GM12878 (cell line): ENCODE measurements at regions of chr2 and their contacts with region 1.

Region 1: GRCh38 chr2:178700922-178701342 is 106.3 kb downstream of the TTN start:
- DNase-seq: no peak
- ATAC-seq: peak; percentile 55
- H3K4me3 ChIP-seq: no peak overlapping the region
- H3K27ac ChIP-seq: no peak overlapping the region
- H3K4me1 ChIP-seq: no peaks in the 10 kb centered on the region
- H3K27me3 ChIP-seq: no peaks in the 10 kb centered on the region
- CTCF ChIP-seq: peak; percentile 69 to 94 (median 87)
- EP300 ChIP-seq: no peak
- POLR2A ChIP-seq: no peak
- RAD21 ChIP-seq: peak; percentile 42; the same call in 1 of the 2 replicates

Region 2: GRCh38 chr2:178689808-178690207 is 11.1 kb before region 1 on chr2:
- CTCF ChIA-PET with region 1: interaction called, 28 read pairs
- POLR2A ChIA-PET with region 1: no interaction called
- RAD21 ChIA-PET with region 1: interaction called, 3 read pairs
- SMC1A ChIA-PET with region 1: interaction called, 7 read pairs
- in situ Hi-C with region 1: no loop called
- intact Hi-C with region 1: no loop called
- DNase-seq: no peak
- ATAC-seq: no peak
- H3K4me3 ChIP-seq: no peak overlapping the region
- H3K27ac ChIP-seq: no peak overlapping the region
- H3K4me1 ChIP-seq: no peaks in the 10 kb centered on the region
- H3K27me3 ChIP-seq: no peaks in the 10 kb centered on the region
- CTCF ChIP-seq: no peak
- EP300 ChIP-seq: no peak
- POLR2A ChIP-seq: no peak
- RAD21 ChIP-seq: no peak

Region 3: GRCh38 chr2:178718283-178718682 is 17.4 kb after region 1 on chr2:
- CTCF ChIA-PET with region 1: interaction called, 12 read pairs
- POLR2A ChIA-PET with region 1: no interaction called
- RAD21 ChIA-PET with region 1: interaction called, 3 read pairs
- SMC1A ChIA-PET with region 1: no interaction called
- in situ Hi-C with region 1: no loop called
- intact Hi-C with region 1: no loop called
- DNase-seq: no peak
- ATAC-seq: no peak
- H3K4me3 ChIP-seq: no peak overlapping the region
- H3K27ac ChIP-seq: no peak overlapping the region
- H3K4me1 ChIP-seq: no peaks in the 10 kb centered on the region
- H3K27me3 ChIP-seq: no peaks in the 10 kb centered on the region
- CTCF ChIP-seq: no peak
- EP300 ChIP-seq: no peak
- POLR2A ChIP-seq: no peak
- RAD21 ChIP-seq: no peak

Region 4: DNA sequence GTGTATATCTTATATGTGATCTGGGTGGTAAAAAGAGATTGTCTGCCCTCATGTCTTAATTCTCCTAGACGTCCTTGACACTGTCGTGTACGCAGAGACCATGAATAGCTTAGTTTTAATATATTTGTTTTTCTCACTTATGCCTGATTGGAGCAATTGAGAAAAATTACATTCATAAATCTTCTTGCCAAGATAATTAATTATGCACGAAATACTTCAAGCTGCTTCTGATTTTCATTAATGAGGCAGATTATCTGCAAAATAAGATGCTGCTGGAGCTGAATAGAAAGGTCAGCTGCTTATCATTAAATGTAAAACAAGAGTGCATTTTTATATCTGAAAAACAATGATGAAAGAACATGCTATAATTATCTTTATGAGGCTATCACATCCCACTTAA is 253.1 kb after region 1 on chr2:
- CTCF ChIA-PET with region 1: no interaction called
- POLR2A ChIA-PET with region 1: no interaction called
- RAD21 ChIA-PET with region 1: no interaction called
- SMC1A ChIA-PET with region 1: no interaction called
- in situ Hi-C with region 1: no loop called
- intact Hi-C with region 1: no loop called
- DNase-seq: no peak
- ATAC-seq: no peak
- H3K4me3 ChIP-seq: no peak overlapping the region
- H3K27ac ChIP-seq: no peak overlapping the region
- H3K4me1 ChIP-seq: no peaks in the 10 kb centered on the region
- H3K27me3 ChIP-seq: no peaks in the 10 kb centered on the region
- CTCF ChIP-seq: no peak
- EP300 ChIP-seq: no peak
- POLR2A ChIP-seq: no peak
- RAD21 ChIP-seq: no peak